B cell (primary cell): ENCODE measurements at regions of chr18 and their contacts with region 1.

Region 1: GRCh38 chr18:59864147-59864641 is 35.6 kb upstream of the PMAIP1 start:
- DNase-seq: no peak
- ATAC-seq: no peak
- H3K4me3 ChIP-seq: no peak overlapping the region
- H3K4me3 Mint-ChIP-seq: no peak overlapping the region
- H3K27ac ChIP-seq: no peak overlapping the region
- H3K27ac Mint-ChIP-seq: no peak overlapping the region
- H3K4me1 ChIP-seq: peaks cover 15 to 24% of the 10 kb centered on the region in 2 donors
- H3K4me1 Mint-ChIP-seq: peaks cover 29% of the 10 kb centered on the region
- H3K27me3 ChIP-seq: peaks cover 0 to 4% (median 0%) of the 10 kb centered on the region in 4 experiments
- H3K27me3 Mint-ChIP-seq: no peaks in the 10 kb centered on the region
- CTCF ChIP-seq: no peak

Region 2: GRCh38 chr18:59769129-59769865 is 94.9 kb before region 1 on chr18:
- CTCF ChIA-PET with region 1: no interaction called
- POLR2A ChIA-PET with region 1: no interaction called
- intact Hi-C with region 1: no loop called
- DNase-seq: no peak
- ATAC-seq: no peak
- H3K4me3 ChIP-seq: no peak overlapping the region
- H3K4me3 Mint-ChIP-seq: no peak overlapping the region
- H3K27ac ChIP-seq: no peak overlapping the region
- H3K27ac Mint-ChIP-seq: no peak overlapping the region
- H3K4me1 ChIP-seq: no peaks in the 10 kb centered on the region
- H3K4me1 Mint-ChIP-seq: no peaks in the 10 kb centered on the region
- H3K27me3 ChIP-seq: peaks cover 0 to 8% (median 3%) of the 10 kb centered on the region in 4 experiments
- H3K27me3 Mint-ChIP-seq: peaks cover 42% of the 10 kb centered on the region
- CTCF ChIP-seq: no peak

Region 3: GRCh38 chr18:59885579-59886163 is 21.5 kb after region 1 on chr18:
- CTCF ChIA-PET with region 1: interaction called, 3 read pairs
- POLR2A ChIA-PET with region 1: interaction called, 3 read pairs
- intact Hi-C with region 1: loop called (anchors 2 kb)
- DNase-seq: peak; percentile 75
- ATAC-seq: peak; percentile 78
- H3K4me3 ChIP-seq: peak overlapping the region in 2 of 5 experiments; percentile 32 to 44
- H3K4me3 Mint-ChIP-seq: peak overlapping the region; percentile 60
- H3K27ac ChIP-seq: peak overlapping the region; percentile 65 to 68
- H3K27ac Mint-ChIP-seq: peak overlapping the region; percentile 84
- H3K4me1 ChIP-seq: peaks cover 36 to 42% of the 10 kb centered on the region in 2 donors
- H3K4me1 Mint-ChIP-seq: peaks cover 52% of the 10 kb centered on the region
- H3K27me3 ChIP-seq: no peaks in the 10 kb centered on the region
- H3K27me3 Mint-ChIP-seq: no peaks in the 10 kb centered on the region
- CTCF ChIP-seq: no peak

Region 4: GRCh38 chr18:60123031-60123430 is 258.8 kb after region 1 on chr18:
- CTCF ChIA-PET with region 1: no interaction called
- POLR2A ChIA-PET with region 1: no interaction called
- intact Hi-C with region 1: no loop called
- DNase-seq: no peak
- ATAC-seq: no peak
- H3K4me3 ChIP-seq: no peak overlapping the region
- H3K4me3 Mint-ChIP-seq: no peak overlapping the region
- H3K27ac ChIP-seq: no peak overlapping the region
- H3K27ac Mint-ChIP-seq: no peak overlapping the region
- H3K4me1 ChIP-seq: no peaks in the 10 kb centered on the region
- H3K4me1 Mint-ChIP-seq: no peaks in the 10 kb centered on the region
- H3K27me3 ChIP-seq: no peaks in the 10 kb centered on the region
- H3K27me3 Mint-ChIP-seq: no peaks in the 10 kb centered on the region
- CTCF ChIP-seq: no peak